ENCODE measurements at regions of chr19 and their contacts with region 1.

Region 1: DNA sequence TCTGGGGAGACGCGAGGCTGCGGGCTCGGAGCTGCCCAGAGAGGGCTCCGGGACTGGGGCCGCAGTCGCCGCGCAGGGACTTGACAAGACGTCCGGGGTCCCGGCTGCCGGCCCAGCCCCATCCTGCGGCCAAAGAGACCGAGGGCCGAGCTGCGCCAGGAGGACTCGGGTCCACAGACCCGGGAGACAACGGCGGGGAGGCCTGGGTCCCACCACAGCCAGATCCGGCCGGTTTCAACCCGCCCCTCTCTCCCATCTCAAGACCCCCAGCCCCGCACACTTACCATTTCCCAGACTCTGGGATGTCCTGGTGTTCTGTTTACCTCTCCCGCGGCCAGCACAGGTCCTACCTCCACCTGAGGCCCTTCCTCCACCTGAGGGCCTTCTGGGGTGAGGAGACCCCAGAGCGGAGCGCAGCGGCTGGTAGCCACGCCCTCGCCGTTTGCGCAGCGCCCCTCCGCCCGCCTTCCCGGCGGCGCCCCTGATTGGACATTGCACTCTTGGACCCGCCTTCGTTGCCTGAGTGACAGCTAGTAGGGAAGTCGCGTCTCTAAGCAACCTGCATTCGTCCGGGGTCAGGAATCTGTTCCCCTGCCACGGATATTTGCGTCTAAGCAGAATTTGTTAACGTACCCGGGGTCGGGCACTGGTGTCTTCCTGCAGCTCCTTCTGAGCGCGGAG is at the start of gene ZNF709:
- H3K4me3 Mint-ChIP-seq: peak within 1 kb of the TSS; percentile 96
- H3K27ac Mint-ChIP-seq: peak within 1 kb of the TSS; percentile 84
- H3K4me1 Mint-ChIP-seq: peaks cover 31% of the 10 kb centered on the region
- H3K27me3 Mint-ChIP-seq: peaks cover 4% of the 10 kb centered on the region

Region 2: GRCh38 chr19:12440541-12441316 is 43.8 kb before region 1 on chr19 and contains the start of gene ZNF443:
- intact Hi-C with region 1: loop called (anchors 2 kb)
- H3K4me3 Mint-ChIP-seq: peak within 1 kb of the TSS; percentile 100
- H3K27ac Mint-ChIP-seq: peak within 1 kb of the TSS; percentile 89
- H3K4me1 Mint-ChIP-seq: peaks cover 12% of the 10 kb centered on the region
- H3K27me3 Mint-ChIP-seq: no peaks in the 10 kb centered on the region